ENCODE measurements at regions of chr20 and their contacts with region 1.

Region 1: GRCh38 chr20:35146920-35147574 is at the start of gene EDEM2:
- DNase-seq: peak; percentile 93
- H3K4me3 ChIP-seq: peak within 1 kb of the TSS; percentile 49 to 85 (median 82)
- H3K27ac ChIP-seq: peak within 1 kb of the TSS; percentile 81
- H3K4me1 ChIP-seq: peaks cover 24% of the 10 kb centered on the region
- H3K27me3 ChIP-seq: no peaks in the 10 kb centered on the region
- CTCF ChIP-seq: peak in 1 of 2 donors; percentile 10
- POLR2A ChIP-seq: peak; percentile 75
- total RNA-seq, gene EDEM2: 37.5 and 39.5 TPM in 2 replicates

Region 2: DNA sequence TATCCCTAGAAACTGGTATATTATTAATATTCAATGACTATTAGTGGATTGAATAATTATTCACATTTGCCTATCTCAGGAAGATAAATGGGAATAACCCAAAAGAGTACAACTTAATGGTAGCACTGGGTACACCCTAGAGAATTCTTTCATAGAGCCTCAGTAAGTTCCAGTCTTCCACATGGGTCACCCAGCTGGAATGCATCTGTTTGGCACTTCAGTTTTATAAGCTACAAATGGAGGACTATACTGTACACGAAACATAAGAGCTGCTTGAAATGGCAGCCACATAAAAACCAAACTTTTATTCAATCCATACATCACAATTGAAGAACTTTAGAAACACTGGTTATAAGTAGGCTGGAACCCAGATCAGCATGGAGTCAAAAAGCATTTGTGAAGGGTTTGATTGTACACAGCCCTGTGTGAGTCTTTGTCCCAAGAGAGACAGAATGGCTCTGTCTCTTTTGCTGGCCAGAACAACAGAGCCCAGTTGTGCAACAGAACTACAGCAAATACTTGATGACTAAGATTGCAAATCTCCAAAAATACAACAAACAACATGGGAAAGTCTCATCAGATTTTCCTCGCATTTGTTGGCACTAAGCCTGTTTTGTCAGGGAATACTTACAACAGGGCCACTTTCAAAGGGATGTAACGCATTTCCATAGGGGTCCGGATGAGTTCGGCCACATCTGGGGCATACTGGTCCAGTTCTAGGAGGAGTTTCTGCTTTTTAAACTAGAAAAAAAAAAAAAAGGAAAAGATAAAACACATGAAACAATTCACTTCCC is 509.6 kb before region 1 on chr20:
- CTCF ChIA-PET with region 1: no interaction called
- POLR2A ChIA-PET with region 1: no interaction called
- dilution Hi-C with region 1: no loop called
- intact Hi-C with region 1: no loop called
- DNase-seq: no peak
- H3K4me3 ChIP-seq: no peak overlapping the region
- H3K27ac ChIP-seq: no peak overlapping the region
- H3K4me1 ChIP-seq: no peaks in the 10 kb centered on the region
- H3K27me3 ChIP-seq: no peaks in the 10 kb centered on the region
- CTCF ChIP-seq: no peak
- POLR2A ChIP-seq: no peak

Region 3: DNA sequence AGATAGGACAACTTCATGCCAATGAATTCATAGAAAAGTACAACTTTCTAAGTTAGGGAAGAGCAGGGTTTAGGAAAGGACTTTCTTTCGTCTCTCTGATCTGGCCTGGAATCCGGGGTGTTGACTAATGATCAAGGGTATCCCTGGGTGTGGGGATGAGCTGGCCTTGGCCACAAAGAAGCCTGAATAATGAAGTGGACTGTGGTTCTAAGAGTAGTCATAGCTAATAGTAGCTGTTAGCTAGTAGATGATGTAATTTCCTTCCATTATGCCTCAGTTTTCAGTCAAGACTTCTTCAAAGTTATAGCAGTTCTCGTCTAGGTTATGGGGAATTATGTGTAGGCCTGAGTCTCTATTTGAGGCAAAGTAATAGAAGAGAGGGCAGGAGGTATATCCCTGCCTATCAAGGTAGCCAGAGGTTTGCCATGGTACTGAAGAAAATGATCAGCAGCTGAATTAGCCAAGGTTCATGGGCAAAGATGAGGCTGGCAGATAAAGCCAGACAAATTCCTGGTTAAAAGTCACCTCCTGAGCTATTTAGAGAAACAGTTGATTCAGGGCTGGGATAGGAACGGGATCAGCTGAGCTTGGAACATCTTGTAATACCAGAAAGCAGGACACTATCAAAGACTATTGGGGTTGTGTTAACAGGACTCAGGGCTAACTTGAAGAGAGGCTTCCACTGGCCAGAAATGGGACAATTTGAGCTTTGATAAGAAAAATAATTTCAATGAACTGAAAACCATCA is 35.7 kb before region 1 on chr20:
- CTCF ChIA-PET with region 1: interaction called, 11 read pairs
- POLR2A ChIA-PET with region 1: no interaction called
- dilution Hi-C with region 1: no loop called
- intact Hi-C with region 1: no loop called
- DNase-seq: peak; percentile 62
- H3K4me3 ChIP-seq: no peak overlapping the region
- H3K27ac ChIP-seq: peak overlapping the region; percentile 91
- H3K4me1 ChIP-seq: peaks cover 16% of the 10 kb centered on the region
- H3K27me3 ChIP-seq: no peaks in the 10 kb centered on the region
- CTCF ChIP-seq: no peak
- POLR2A ChIP-seq: no peak

Region 4: DNA sequence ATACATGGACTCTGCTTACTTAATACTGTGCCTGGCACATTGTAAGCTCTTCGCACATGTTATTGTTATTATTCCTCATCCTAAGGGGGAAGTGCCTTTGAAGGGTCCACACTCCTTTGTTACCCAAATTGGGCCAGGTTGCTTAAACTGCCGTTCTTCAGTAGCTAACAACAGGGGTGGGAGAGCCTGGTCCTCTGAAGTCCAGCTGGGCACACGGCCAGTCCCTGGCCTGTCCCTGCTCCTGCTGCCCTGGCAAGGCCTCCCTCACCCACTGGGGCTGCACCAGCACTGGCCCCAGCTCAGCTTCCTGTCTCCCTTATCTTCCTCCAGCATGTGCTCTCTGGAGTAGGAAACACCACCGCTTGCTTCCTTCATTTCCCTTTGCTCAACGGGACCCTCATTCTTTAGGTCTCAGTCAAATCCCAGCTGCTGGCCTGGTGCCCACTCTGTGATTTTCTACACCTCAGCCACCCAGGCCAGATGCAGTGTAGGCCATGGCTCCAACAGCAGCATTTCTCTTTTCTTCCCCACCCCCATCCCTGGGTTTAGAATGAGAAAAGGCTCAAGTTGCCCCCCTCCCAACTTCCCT is 19.3 kb after region 1 on chr20:
- CTCF ChIA-PET with region 1: interaction called, 79 read pairs
- POLR2A ChIA-PET with region 1: interaction called, 18 read pairs
- dilution Hi-C with region 1: no loop called
- intact Hi-C with region 1: loop called (anchors 1 kb)
- DNase-seq: peak; percentile 99
- H3K4me3 ChIP-seq: no peak overlapping the region
- H3K27ac ChIP-seq: peak overlapping the region; percentile 59
- H3K4me1 ChIP-seq: peaks cover 27% of the 10 kb centered on the region
- H3K27me3 ChIP-seq: no peaks in the 10 kb centered on the region
- CTCF ChIP-seq: no peak
- POLR2A ChIP-seq: peak; percentile 88

Region 5: GRCh38 chr20:35192111-35192872 is 45.2 kb after region 1 on chr20:
- CTCF ChIA-PET with region 1: interaction called, 16 read pairs
- POLR2A ChIA-PET with region 1: no interaction called
- dilution Hi-C with region 1: no loop called
- intact Hi-C with region 1: no loop called
- DNase-seq: peak; percentile 58
- H3K4me3 ChIP-seq: no peak overlapping the region
- H3K27ac ChIP-seq: no peak overlapping the region
- H3K4me1 ChIP-seq: peaks cover 9% of the 10 kb centered on the region
- H3K27me3 ChIP-seq: no peaks in the 10 kb centered on the region
- CTCF ChIP-seq: no peak
- POLR2A ChIP-seq: peak; percentile 35

Region 6: GRCh38 chr20:35215066-35215956 is 68.3 kb after region 1 on chr20:
- CTCF ChIA-PET with region 1: interaction called, 294 read pairs
- POLR2A ChIA-PET with region 1: interaction called, 4 read pairs
- dilution Hi-C with region 1: no loop called
- intact Hi-C with region 1: no loop called
- DNase-seq: no peak
- H3K4me3 ChIP-seq: no peak overlapping the region
- H3K27ac ChIP-seq: no peak overlapping the region
- H3K4me1 ChIP-seq: peaks cover 5% of the 10 kb centered on the region
- H3K27me3 ChIP-seq: peaks cover 3 to 9% of the 10 kb centered on the region in 2 experiments
- CTCF ChIP-seq: no peak
- POLR2A ChIP-seq: no peak

Region 7: DNA sequence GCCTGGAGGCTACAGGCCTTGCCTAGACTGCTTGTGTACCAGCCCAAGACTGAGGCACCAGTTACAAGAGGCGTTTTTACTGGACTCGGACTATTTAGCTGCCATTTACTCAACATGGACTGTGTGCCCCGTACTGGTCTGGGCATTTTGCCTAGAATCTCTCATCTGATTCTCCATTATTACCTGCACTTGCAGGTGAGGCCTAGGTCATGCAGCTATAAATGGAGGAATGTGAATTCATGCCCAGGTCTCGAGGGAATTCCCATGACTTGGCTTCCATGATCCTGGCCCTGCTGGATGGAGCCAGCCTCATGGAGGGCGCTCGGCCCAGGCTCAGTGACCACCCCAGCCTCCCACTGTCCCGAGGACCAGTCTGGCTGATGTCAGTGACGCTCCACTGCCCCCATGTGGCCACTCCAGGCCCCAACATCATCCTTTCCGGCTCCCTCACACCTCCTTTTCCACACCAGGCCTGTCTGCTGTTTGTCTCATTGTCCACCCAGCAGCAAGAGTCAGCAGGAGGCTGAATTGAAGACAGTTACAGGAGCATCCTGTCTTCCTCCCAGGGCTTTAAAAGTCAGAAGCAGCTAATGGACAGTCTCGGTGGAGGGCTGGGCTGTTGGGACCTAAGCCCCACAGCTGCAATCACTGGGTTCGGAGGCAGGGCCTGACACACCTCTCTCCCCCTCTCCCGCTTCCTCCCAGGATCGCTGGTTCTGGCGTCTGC is 122.2 kb after region 1 on chr20:
- CTCF ChIA-PET with region 1: interaction called, 177 read pairs
- POLR2A ChIA-PET with region 1: no interaction called
- dilution Hi-C with region 1: no loop called
- intact Hi-C with region 1: loop called (anchors 1 kb)
- DNase-seq: peak; percentile 66
- H3K4me3 ChIP-seq: no peak overlapping the region
- H3K27ac ChIP-seq: no peak overlapping the region
- H3K4me1 ChIP-seq: no peaks in the 10 kb centered on the region
- H3K27me3 ChIP-seq: no peaks in the 10 kb centered on the region
- CTCF ChIP-seq: peak; percentile 87 to 95
- POLR2A ChIP-seq: no peak

Region 8: GRCh38 chr20:35447082-35447789 is 300.2 kb after region 1 on chr20:
- CTCF ChIA-PET with region 1: interaction called, 12 read pairs
- POLR2A ChIA-PET with region 1: no interaction called
- dilution Hi-C with region 1: no loop called
- intact Hi-C with region 1: no loop called
- DNase-seq: peak; percentile 90
- H3K4me3 ChIP-seq: peak overlapping the region; percentile 21 to 42 (median 22)
- H3K27ac ChIP-seq: no peak overlapping the region
- H3K4me1 ChIP-seq: peaks cover 3% of the 10 kb centered on the region
- H3K27me3 ChIP-seq: no peaks in the 10 kb centered on the region
- CTCF ChIP-seq: peak; percentile 87 to 94
- POLR2A ChIP-seq: no peak

Region 9: GRCh38 chr20:35568645-35569262 is 421.7 kb after region 1 on chr20:
- CTCF ChIA-PET with region 1: no interaction called
- POLR2A ChIA-PET with region 1: no interaction called
- dilution Hi-C with region 1: no loop called
- intact Hi-C with region 1: no loop called
- DNase-seq: no peak
- H3K4me3 ChIP-seq: no peak overlapping the region
- H3K27ac ChIP-seq: no peak overlapping the region
- H3K4me1 ChIP-seq: no peaks in the 10 kb centered on the region
- H3K27me3 ChIP-seq: no peaks in the 10 kb centered on the region
- CTCF ChIP-seq: peak; percentile 3 to 15
- POLR2A ChIP-seq: no peak